Mammary epithelial cell (primary cell): ENCODE measurements at regions of chr3 and their contacts with region 1.

Region 1: DNA sequence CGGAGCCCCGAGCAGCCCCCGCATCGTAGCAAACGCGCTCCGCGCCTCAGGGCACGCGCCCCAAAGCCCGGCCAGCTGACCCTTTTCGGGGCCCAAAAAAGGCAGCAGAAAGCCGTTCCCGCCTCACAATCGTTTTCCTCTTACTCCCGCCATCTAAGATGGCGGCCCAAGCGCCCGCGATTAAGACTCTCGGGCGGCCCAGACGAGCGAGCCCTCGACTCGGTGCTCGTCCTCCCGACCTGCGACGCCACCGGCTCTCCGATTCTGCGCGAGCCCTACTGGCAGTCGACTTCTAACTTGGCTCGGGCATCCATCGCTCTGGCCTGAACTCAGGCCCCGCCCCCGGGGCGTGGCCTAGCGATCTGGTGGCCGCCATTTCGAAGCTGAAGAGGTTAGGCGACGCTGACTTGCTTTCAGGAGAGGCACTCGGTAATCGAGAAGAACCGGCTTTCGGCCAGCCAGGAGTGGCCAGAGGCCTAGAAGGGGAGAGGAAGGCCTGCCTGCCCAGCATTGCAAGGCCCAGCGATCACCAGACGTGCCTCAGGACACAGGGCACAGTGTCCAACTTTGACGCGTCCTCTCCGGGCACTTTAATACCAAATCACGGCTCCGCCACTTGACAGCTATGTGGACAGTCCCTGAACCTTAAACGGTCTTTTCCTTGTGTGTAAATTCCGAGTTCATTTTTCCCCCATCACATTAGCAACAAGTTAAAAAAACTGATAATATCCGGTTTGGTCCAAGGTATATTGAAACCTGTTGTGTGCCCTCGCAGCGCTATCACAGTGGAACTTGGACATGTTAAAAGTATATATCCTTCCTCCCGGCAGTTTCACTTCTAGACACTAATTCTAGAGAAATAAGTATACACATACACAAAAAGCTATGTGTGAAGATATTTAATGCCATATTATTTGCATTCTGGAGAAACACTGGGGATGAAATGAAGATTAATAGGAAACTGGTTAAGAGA is at the start of gene RAF1:
- DNase-seq: peak; percentile 97
- H3K4me3 ChIP-seq: peak within 1 kb of the TSS; percentile 77 to 89 (median 79)
- H3K27ac ChIP-seq: peak within 1 kb of the TSS; percentile 84
- H3K4me1 ChIP-seq: peaks cover 13% of the 10 kb centered on the region
- H3K27me3 ChIP-seq: no peaks in the 10 kb centered on the region
- CTCF ChIP-seq: no peak
- total RNA-seq, gene RAF1: 68.1 to 72.8 TPM

Region 2: GRCh38 chr3:11601446-11602238 is 1062.6 kb before region 1 on chr3:
- CTCF ChIA-PET with region 1: no interaction called
- dilution Hi-C with region 1: no loop called
- in situ Hi-C with region 1: no loop called
- intact Hi-C with region 1: loop called (anchors 5 kb)
- DNase-seq: no peak
- H3K4me3 ChIP-seq: no peak overlapping the region
- H3K27ac ChIP-seq: no peak overlapping the region
- H3K4me1 ChIP-seq: peaks cover 31% of the 10 kb centered on the region
- H3K27me3 ChIP-seq: no peaks in the 10 kb centered on the region
- CTCF ChIP-seq: no peak

Region 3: GRCh38 chr3:12601072-12601471 is 63.1 kb before region 1 on chr3:
- CTCF ChIA-PET with region 1: no interaction called
- dilution Hi-C with region 1: no loop called
- in situ Hi-C with region 1: no loop called
- intact Hi-C with region 1: loop called (anchors 5 kb)
- DNase-seq: no peak
- H3K4me3 ChIP-seq: no peak overlapping the region
- H3K27ac ChIP-seq: no peak overlapping the region
- H3K4me1 ChIP-seq: no peaks in the 10 kb centered on the region
- H3K27me3 ChIP-seq: no peaks in the 10 kb centered on the region
- CTCF ChIP-seq: peak in 1 of 2 donors; percentile 17

Region 4: DNA sequence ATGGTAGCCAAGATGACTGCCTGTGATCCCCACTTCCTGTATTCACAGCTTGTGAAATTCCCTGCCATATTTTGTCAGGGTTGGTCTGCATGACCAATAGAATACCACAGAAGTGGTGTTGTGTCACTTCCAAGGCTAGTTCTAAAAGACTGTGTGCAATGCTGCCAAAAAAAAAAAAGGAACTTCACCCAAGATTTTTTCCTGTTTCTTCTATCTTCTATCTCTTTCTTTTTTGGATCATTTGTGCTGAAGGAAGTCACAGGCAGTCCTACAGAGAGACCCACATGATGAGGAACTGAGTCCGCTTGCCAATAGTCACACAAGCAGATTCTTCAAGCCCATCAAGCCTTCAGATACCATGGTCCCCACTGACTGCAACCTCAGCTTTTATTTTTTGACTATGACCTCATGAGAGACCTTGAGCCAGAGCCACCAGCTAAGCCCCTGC is 17.7 kb after region 1 on chr3:
- CTCF ChIA-PET with region 1: no interaction called
- dilution Hi-C with region 1: no loop called
- in situ Hi-C with region 1: no loop called
- intact Hi-C with region 1: loop called (anchors 1 kb)
- DNase-seq: peak; percentile 73
- H3K4me3 ChIP-seq: no peak overlapping the region
- H3K27ac ChIP-seq: no peak overlapping the region
- H3K4me1 ChIP-seq: peaks cover 24% of the 10 kb centered on the region
- H3K27me3 ChIP-seq: no peaks in the 10 kb centered on the region
- CTCF ChIP-seq: no peak

Region 5: DNA sequence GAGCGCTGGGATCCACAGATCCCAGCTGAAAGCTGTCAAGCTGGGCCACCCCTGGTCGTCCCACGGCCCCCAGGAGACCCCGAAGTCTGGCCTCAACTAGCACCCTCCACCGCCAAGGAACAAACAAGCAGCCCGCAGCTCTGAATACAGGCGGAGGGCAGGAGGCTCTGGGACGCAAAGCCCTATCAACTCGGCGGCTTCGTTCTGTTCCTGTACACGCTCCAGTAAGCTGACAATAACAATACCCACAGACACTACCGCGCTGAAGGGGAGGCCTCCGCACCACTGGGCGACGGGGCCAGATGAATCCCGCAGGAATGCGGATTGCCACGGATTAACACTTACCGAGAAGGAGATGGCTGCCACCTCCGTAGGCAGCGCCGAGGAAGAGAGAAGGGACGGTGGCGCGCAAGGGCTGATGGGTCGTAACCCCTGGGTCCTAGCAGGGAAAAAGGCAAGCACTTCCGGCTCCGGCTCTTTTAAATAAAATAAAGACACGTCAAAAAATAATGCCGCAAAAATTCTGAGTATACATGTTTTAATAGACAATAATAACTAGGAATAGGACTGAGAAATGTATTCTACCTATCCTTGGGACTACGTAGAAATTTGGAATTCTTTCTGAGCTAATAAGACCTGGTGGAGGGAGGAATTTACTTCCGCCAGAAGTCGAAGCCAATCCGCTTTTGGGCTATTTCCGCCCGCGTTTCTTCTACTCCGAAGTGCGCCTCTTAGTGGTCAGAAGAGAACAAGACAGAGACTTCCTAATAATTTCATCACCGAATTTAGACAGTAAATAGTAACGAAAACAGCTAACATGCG is 177.1 kb after region 1 on chr3 and contains the start of gene RPL32:
- CTCF ChIA-PET with region 1: no interaction called
- dilution Hi-C with region 1: no loop called
- in situ Hi-C with region 1: no loop called
- intact Hi-C with region 1: loop called (anchors 5 kb)
- DNase-seq: peak; percentile 89
- H3K4me3 ChIP-seq: peak within 1 kb of the TSS; percentile 89 to 91 (median 89)
- H3K27ac ChIP-seq: peak within 1 kb of the TSS; percentile 97
- H3K4me1 ChIP-seq: peaks cover 26% of the 10 kb centered on the region
- H3K27me3 ChIP-seq: no peaks in the 10 kb centered on the region
- CTCF ChIP-seq: peak; percentile 73 to 91
- total RNA-seq, gene RPL32: 686 to 1,631 TPM